Adrenal gland (tissue), 19 donors: ENCODE measurements at regions of chr1 and their contacts with region 1.

Region 1: DNA sequence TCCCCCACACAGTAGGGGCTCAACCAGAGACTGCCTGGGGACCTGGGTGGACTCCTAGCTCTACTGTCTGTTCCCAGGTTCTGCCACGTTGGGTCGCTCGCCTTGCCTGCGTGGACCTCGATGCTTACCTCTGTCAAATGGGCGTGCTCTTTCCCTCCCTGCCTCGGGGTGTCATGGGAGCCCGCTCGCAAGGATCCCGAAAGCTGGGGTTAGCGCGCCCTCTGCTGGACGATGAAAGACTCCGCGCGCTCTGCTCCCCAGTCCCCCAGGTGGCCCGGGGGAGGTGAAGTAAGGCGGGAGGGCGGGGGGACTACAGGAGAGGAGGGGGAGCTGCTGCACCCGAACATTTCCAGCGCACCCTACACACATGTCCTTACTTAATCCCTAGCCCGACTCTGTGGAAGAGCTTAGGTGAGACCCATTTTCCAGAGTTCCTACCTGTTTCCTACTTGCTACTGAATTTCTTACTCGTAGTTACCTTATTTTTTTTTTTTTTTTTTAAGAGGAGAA is 2.3 kb upstream of the BSND start:
- DNase-seq: peak; percentile 75 to 89 (median 79)
- H3K4me3 ChIP-seq: peak overlapping the region in 1 of 4 donors; percentile 16
- H3K27ac ChIP-seq: no peak overlapping the region
- H3K4me1 ChIP-seq: peaks cover 0 to 11% of the 10 kb centered on the region in 2 donors
- H3K27me3 ChIP-seq: peaks cover 16% of the 10 kb centered on the region
- CTCF ChIP-seq: peak; percentile 78 to 92 (median 89)
- POLR2A ChIP-seq: no peak

Region 2: DNA sequence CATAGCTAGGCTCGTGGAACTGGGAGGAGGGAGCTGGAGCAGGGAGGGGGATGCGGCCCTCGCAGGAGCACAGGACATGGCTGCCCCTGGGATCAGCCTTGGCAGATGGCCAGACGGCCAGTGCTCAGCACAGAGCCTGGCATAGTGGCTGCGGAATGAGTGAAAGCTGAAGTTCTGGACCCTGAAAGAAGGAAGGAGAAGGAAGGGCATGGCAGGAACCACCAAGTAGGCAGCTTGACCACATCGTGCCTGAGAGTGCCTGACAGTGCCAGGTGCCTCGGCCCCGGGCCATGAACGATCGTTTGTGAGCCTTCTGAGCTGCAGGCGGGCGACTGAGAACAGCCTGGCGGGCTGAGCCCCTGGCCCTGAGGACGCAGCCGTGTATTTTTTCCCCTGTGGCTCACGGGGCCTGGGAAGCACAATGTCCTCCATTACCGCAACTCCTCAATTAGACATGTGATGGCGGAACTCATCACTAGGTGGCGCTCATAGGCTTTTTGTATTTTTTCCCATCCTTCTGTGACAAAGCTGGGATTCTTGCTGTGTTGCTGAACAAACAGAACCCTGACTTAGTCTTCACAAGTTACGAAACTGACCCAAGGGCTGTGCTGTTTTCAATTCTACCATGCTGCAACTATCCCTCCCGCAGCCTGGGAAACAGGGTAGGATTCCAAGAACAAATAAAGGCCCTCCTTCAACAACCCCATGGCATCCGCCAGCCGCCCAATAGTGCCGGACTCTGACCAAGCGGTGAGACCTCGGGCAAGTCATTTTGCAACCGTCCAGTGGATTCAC is 45.8 kb before region 1 on chr1:
- intact Hi-C with region 1: loop called (anchors 2 kb)
- DNase-seq: peak; percentile 75 to 94 (median 79)
- H3K4me3 ChIP-seq: no peak overlapping the region
- H3K27ac ChIP-seq: peak overlapping the region in 4 of 5 donors; percentile 11 to 78 (median 58)
- H3K4me1 ChIP-seq: peaks cover 7 to 8% of the 10 kb centered on the region in 2 donors
- H3K27me3 ChIP-seq: no peaks in the 10 kb centered on the region
- CTCF ChIP-seq: peak; percentile 79 to 95 (median 90)
- POLR2A ChIP-seq: no peak

Region 3: DNA sequence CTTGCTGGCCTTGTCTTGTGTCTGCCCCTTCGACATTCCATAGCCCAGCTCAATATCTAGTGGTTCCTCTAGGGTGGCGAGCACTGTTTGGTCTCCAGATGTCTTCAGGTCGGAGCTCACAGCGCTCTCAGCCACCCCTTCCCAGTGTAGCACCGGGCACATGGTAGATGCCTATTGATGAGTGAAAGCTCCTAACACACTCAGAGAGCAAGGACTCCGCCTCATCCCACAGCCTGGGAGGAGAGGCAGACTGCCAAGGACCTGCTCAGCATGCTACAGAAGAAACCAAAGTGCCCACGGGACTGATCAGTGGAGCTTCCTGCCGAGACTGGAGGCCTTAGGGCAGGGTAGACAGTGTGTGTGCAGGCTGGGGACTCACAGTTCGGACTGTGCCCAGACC is 53.9 kb after region 1 on chr1:
- intact Hi-C with region 1: no loop called
- DNase-seq: peak in 6 of 7 donors; percentile 55 to 70 (median 66)
- H3K4me3 ChIP-seq: no peak overlapping the region
- H3K27ac ChIP-seq: no peak overlapping the region
- H3K4me1 ChIP-seq: peaks cover 0 to 12% of the 10 kb centered on the region in 2 donors
- H3K27me3 ChIP-seq: no peaks in the 10 kb centered on the region
- CTCF ChIP-seq: no peak
- POLR2A ChIP-seq: no peak